Activated CD4-positive, alpha-beta T cell treated with anti-CD3 and anti-CD28 coated beads for 36 hours (primary cell): ENCODE measurements at regions of chr7 and their contacts with region 1.

Region 1: GRCh38 chr7:150737265-150738055 is at the start of gene GIMAP5:
- DNase-seq: peak; percentile 75
- ATAC-seq: peak; percentile 68
- H3K4me3 Mint-ChIP-seq: peak within 1 kb of the TSS; percentile 86
- H3K27ac Mint-ChIP-seq: peak within 1 kb of the TSS; percentile 98
- H3K4me1 Mint-ChIP-seq: peaks cover 74% of the 10 kb centered on the region
- H3K27me3 Mint-ChIP-seq: no peaks in the 10 kb centered on the region
- total RNA-seq, gene GIMAP5: 47.6 to 53.3 TPM

Region 2: GRCh38 chr7:150322833-150323681 is 414.4 kb before region 1 on chr7 and contains the starts of genes ACTR3C and LRRC61:
- CTCF ChIA-PET with region 1: no interaction called
- POLR2A ChIA-PET with region 1: no interaction called
- intact Hi-C with region 1: loop called in 1 of 2 experiments (anchors 5 kb)
- DNase-seq: peak; percentile 78
- ATAC-seq: peak; percentile 24
- H3K4me3 Mint-ChIP-seq: peak within 1 kb of the TSS; percentile 91
- H3K27ac Mint-ChIP-seq: peak within 1 kb of the TSS; percentile 99
- H3K4me1 Mint-ChIP-seq: peaks cover 52% of the 10 kb centered on the region
- H3K27me3 Mint-ChIP-seq: no peaks in the 10 kb centered on the region
- total RNA-seq, gene ACTR3C: 3.2 to 4.7 TPM
- total RNA-seq, gene LRRC61: 13.0 to 17.4 TPM

Region 3: DNA sequence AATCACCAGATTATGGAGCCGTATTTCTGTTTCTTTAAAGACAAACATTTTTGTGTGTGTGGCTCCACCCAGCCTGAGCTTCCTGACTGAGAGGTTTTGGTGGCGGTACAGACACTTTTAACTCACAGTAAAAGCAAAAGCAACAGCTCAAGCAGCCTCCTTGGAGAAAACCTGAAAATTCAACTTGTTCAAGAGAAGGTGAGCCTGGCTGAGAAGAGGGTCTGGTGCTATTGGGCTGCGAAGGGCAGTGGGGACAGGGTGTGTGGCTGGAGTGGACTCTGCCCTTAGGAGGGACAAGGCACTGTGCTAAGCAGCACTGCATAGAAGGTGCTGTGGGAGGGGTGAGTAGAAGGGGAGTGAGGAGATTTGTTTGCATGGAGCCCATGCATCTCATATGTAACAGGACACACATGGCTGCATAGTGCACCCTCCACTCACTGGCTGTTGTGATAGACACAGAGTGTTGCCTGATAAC is 222.7 kb before region 1 on chr7 and contains the start of gene GIMAP7:
- CTCF ChIA-PET with region 1: no interaction called
- POLR2A ChIA-PET with region 1: no interaction called
- intact Hi-C with region 1: loop called (anchors 1 to 5 kb)
- DNase-seq: peak; percentile 73
- ATAC-seq: peak; percentile 81
- H3K4me3 Mint-ChIP-seq: peak within 1 kb of the TSS; percentile 96
- H3K27ac Mint-ChIP-seq: peak within 1 kb of the TSS; percentile 99
- H3K4me1 Mint-ChIP-seq: peaks cover 48% of the 10 kb centered on the region
- H3K27me3 Mint-ChIP-seq: no peaks in the 10 kb centered on the region
- total RNA-seq, gene GIMAP7: 34.5 to 36.9 TPM

Region 4: GRCh38 chr7:150620617-150621371 is 116.7 kb before region 1 on chr7:
- CTCF ChIA-PET with region 1: interaction called, 3 read pairs
- POLR2A ChIA-PET with region 1: no interaction called
- intact Hi-C with region 1: loop called (anchors 2 to 5 kb)
- DNase-seq: no peak
- ATAC-seq: peak; percentile 75
- H3K4me3 Mint-ChIP-seq: no peak overlapping the region
- H3K27ac Mint-ChIP-seq: peak overlapping the region; percentile 79
- H3K4me1 Mint-ChIP-seq: peaks cover 53% of the 10 kb centered on the region
- H3K27me3 Mint-ChIP-seq: no peaks in the 10 kb centered on the region

Region 5: DNA sequence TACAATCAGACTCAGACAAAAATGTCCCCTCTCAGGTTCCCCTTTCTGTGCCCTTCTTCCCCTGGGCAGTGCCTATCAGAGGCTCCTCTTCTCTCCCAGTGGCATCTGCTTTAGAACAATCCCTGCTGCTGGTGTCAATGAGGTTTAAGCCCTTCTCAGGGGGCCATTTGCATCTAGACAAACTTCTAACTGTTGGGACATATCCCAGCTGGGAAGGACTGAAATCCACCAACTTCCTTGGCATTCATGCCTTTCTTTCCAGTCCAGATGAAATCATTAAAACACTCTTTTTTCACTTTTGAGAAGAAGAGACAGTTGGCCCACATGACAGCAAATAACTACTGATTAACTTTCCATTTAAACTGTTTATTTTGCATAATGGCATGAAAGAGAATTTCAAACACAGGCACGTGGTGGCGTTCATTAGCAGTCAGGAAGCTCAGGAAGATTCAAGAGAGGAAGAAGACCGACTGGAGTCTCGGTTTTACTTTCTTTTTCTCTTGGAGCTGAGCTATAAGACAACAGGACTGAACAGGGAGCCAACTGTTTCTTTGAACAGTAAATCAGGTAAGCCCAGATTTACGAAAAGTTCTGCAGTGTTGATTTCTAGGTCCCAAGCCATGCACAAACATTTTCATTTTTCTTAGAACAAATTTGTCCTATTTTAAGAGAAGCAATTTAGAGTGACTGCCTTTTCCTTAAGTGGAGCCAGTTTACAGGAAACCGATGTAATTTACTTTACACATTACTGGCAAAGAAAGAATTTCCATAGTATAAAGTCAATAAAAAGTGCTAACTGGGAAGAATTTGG is 52.0 kb before region 1 on chr7 and contains the start of gene GIMAP2:
- CTCF ChIA-PET with region 1: no interaction called
- POLR2A ChIA-PET with region 1: interaction called, 4 read pairs
- intact Hi-C with region 1: loop called in 1 of 2 experiments (anchors 5 kb)
- DNase-seq: peak; percentile 41
- ATAC-seq: peak; percentile 85
- H3K4me3 Mint-ChIP-seq: peak within 1 kb of the TSS; percentile 96
- H3K27ac Mint-ChIP-seq: peak within 1 kb of the TSS; percentile 100
- H3K4me1 Mint-ChIP-seq: peaks cover 75% of the 10 kb centered on the region
- H3K27me3 Mint-ChIP-seq: no peaks in the 10 kb centered on the region
- total RNA-seq, gene GIMAP2: 30.0 to 40.1 TPM